Caco-2 (cell line): ENCODE measurements at regions of chr10 and their contacts with region 1.

Region 1: GRCh38 chr10:85621562-85621961 is 745.0 kb downstream of the GRID1 start:
- DNase-seq: peak; percentile 54 to 72
- H3K4me3 ChIP-seq: no peak overlapping the region
- H3K4me3 Mint-ChIP-seq: peak overlapping the region; percentile 48
- H3K27ac Mint-ChIP-seq: peak overlapping the region; percentile 74
- H3K4me1 ChIP-seq: peaks cover 32% of the 10 kb centered on the region
- H3K4me1 Mint-ChIP-seq: peaks cover 28% of the 10 kb centered on the region
- H3K27me3 ChIP-seq: no peaks in the 10 kb centered on the region
- H3K27me3 Mint-ChIP-seq: no peaks in the 10 kb centered on the region
- CTCF ChIP-seq: no peak

Region 2: GRCh38 chr10:85642421-85643170 is 21.0 kb after region 1 on chr10:
- CTCF ChIA-PET with region 1: no interaction called
- POLR2A ChIA-PET with region 1: no interaction called
- intact Hi-C with region 1: loop called (anchors 1 kb)
- DNase-seq: peak; percentile 58 to 72
- H3K4me3 ChIP-seq: no peak overlapping the region
- H3K4me3 Mint-ChIP-seq: peak overlapping the region; percentile 37
- H3K27ac Mint-ChIP-seq: peak overlapping the region; percentile 90
- H3K4me1 ChIP-seq: peaks cover 53% of the 10 kb centered on the region
- H3K4me1 Mint-ChIP-seq: peaks cover 36% of the 10 kb centered on the region
- H3K27me3 ChIP-seq: no peaks in the 10 kb centered on the region
- H3K27me3 Mint-ChIP-seq: no peaks in the 10 kb centered on the region
- CTCF ChIP-seq: no peak

Region 3: DNA sequence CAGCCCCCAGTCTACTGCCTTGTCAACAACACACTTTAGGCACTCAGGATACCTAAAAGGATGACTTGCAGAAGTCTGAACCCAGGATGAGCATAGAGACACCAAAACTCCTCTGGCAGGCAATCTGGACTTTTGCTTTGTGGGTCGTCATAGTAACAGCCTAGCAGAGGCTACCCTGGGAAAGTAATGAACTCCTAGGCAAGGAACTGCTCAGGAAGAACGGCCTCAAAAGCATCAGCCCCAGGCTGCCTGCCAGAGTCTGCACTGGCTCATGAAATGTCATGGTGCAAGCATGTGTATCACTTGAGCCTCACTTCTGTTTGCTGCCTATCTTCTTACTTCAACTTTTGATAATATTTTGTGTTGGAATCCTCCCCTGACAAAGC is 29.9 kb after region 1 on chr10:
- CTCF ChIA-PET with region 1: no interaction called
- POLR2A ChIA-PET with region 1: no interaction called
- intact Hi-C with region 1: loop called (anchors 2 kb)
- DNase-seq: no peak
- H3K4me3 ChIP-seq: no peak overlapping the region
- H3K4me3 Mint-ChIP-seq: no peak overlapping the region
- H3K27ac Mint-ChIP-seq: no peak overlapping the region
- H3K4me1 ChIP-seq: peaks cover 17% of the 10 kb centered on the region
- H3K4me1 Mint-ChIP-seq: peaks cover 15% of the 10 kb centered on the region
- H3K27me3 ChIP-seq: no peaks in the 10 kb centered on the region
- H3K27me3 Mint-ChIP-seq: no peaks in the 10 kb centered on the region
- CTCF ChIP-seq: no peak

Region 4: GRCh38 chr10:85682601-85683000 is 61.0 kb after region 1 on chr10:
- CTCF ChIA-PET with region 1: no interaction called
- POLR2A ChIA-PET with region 1: no interaction called
- intact Hi-C with region 1: loop called (anchors 5 kb)
- DNase-seq: no peak
- H3K4me3 ChIP-seq: no peak overlapping the region
- H3K4me3 Mint-ChIP-seq: no peak overlapping the region
- H3K27ac Mint-ChIP-seq: no peak overlapping the region
- H3K4me1 ChIP-seq: no peaks in the 10 kb centered on the region
- H3K4me1 Mint-ChIP-seq: no peaks in the 10 kb centered on the region
- H3K27me3 ChIP-seq: no peaks in the 10 kb centered on the region
- H3K27me3 Mint-ChIP-seq: no peaks in the 10 kb centered on the region
- CTCF ChIP-seq: no peak

Region 5: GRCh38 chr10:85864173-85864549 is 242.6 kb after region 1 on chr10:
- CTCF ChIA-PET with region 1: no interaction called
- POLR2A ChIA-PET with region 1: no interaction called
- intact Hi-C with region 1: no loop called
- DNase-seq: no peak
- H3K4me3 ChIP-seq: no peak overlapping the region
- H3K4me3 Mint-ChIP-seq: no peak overlapping the region
- H3K27ac Mint-ChIP-seq: no peak overlapping the region
- H3K4me1 ChIP-seq: peaks cover 13% of the 10 kb centered on the region
- H3K4me1 Mint-ChIP-seq: peaks cover 10% of the 10 kb centered on the region
- H3K27me3 ChIP-seq: no peaks in the 10 kb centered on the region
- H3K27me3 Mint-ChIP-seq: no peaks in the 10 kb centered on the region
- CTCF ChIP-seq: no peak